AG04450 (cell line): ENCODE measurements at regions of chr11 and their contacts with region 1.

Region 1: GRCh38 chr11:126716456-126717083 is 284.0 kb downstream of the KIRREL3 start:
- DNase-seq: no peak
- H3K4me3 ChIP-seq: no peak overlapping the region
- H3K27ac ChIP-seq: no peak overlapping the region
- H3K27me3 ChIP-seq: no peaks in the 10 kb centered on the region
- CTCF ChIP-seq: peak; percentile 70

Region 2: DNA sequence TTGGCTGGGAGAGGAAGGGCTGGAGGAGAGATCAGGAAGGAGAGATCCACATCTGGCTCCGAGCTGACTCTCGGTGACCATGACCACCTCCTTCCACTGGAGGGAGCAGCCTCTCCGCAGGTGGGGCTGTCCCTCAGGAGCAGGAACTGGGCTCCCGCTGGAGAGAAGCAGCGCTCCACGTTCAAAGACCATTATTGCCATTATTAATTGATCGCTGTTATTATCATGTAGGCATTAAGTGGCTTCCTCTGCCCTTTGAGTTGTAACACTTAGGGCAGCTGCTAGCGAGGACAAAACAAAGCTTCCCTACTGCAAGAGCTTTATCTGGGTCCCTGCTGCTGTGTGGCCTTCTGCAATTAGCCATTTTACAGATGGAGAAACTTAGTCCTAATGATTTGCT is 109.2 kb before region 1 on chr11:
- CTCF ChIA-PET with region 1: interaction called, 16 read pairs
- POLR2A ChIA-PET with region 1: no interaction called
- DNase-seq: peak; percentile 42
- H3K4me3 ChIP-seq: no peak overlapping the region
- H3K27ac ChIP-seq: no peak overlapping the region
- H3K27me3 ChIP-seq: no peaks in the 10 kb centered on the region
- CTCF ChIP-seq: peak; percentile 96

Region 3: GRCh38 chr11:126727381-126727780 is 10.8 kb after region 1 on chr11:
- CTCF ChIA-PET with region 1: interaction called, 18 read pairs
- POLR2A ChIA-PET with region 1: no interaction called
- DNase-seq: no peak
- H3K4me3 ChIP-seq: no peak overlapping the region
- H3K27ac ChIP-seq: no peak overlapping the region
- H3K27me3 ChIP-seq: no peaks in the 10 kb centered on the region
- CTCF ChIP-seq: no peak

Region 4: DNA sequence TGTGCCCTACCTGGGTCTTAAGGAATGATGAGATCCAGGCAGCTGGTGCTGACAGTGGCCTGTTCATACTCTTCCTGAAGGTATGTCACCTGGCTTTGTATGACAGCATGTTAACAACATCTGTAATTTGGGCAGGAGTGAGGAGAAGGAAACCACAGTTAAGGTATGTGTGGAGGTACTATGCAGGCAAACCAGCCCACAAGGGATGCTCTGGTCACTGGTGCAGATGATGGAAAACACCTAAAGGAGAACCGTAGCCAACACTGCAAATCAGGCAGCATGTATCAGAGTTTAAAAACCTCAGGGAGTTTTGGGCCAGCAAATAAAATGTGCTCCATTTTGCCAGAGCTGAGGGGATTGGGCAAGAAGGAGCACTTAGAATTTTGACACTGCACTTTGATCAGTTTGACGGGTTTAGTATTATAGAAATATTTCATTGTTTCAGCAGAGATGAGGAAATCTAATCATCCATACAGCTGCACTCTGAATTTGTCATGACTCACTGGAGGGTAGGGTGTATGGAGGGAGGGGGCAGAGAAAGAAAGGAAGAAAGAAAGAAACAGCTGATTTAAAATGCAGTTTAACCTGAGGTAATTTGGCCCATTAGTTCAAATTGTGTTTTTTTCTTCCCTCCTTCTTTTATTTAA is 23.1 kb after region 1 on chr11:
- CTCF ChIA-PET with region 1: interaction called, 10 read pairs
- POLR2A ChIA-PET with region 1: no interaction called
- DNase-seq: no peak
- H3K4me3 ChIP-seq: no peak overlapping the region
- H3K27ac ChIP-seq: peak overlapping the region; percentile 13
- H3K27me3 ChIP-seq: no peaks in the 10 kb centered on the region
- CTCF ChIP-seq: no peak

Region 5: DNA sequence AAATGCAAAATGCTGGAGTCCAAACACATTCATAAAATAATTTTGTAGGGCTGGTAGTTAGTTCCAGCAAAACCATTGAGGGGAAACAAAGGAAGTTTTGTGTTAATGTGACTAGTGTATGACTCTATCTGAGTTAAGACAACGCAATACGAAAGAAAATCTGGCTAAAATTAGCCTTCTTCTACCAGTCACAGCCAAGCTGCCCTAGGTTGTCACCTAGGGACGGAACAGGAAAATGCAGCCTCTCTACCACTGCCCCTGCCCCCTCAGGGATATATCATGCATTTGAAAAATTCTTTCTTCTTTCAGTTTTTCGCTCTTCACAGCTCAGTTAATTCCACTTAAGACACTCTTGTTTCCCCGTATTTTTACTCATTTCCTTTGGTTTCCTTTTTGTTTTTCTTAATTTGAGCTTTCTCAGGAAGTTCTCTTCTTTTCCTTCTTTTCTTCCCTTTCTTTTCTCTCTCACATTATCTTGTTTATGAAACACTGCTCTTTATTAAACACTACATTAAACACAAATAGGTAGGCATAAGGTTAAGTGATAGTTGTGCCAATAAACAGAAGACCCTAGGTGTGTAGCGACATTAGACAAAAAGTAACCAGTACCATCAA is 253.4 kb after region 1 on chr11:
- CTCF ChIA-PET with region 1: interaction called, 26 read pairs
- POLR2A ChIA-PET with region 1: no interaction called
- DNase-seq: no peak
- H3K4me3 ChIP-seq: no peak overlapping the region
- H3K27ac ChIP-seq: peak overlapping the region; percentile 34
- H3K27me3 ChIP-seq: no peaks in the 10 kb centered on the region
- CTCF ChIP-seq: peak; percentile 92

Region 6: GRCh38 chr11:127000291-127000968 is 283.9 kb after region 1 on chr11 and contains the start of gene KIRREL3:
- CTCF ChIA-PET with region 1: interaction called, 14 read pairs
- POLR2A ChIA-PET with region 1: no interaction called
- DNase-seq: no peak
- H3K4me3 ChIP-seq: peak within 1 kb of the TSS; percentile 80
- H3K27ac ChIP-seq: peak within 1 kb of the TSS; percentile 52
- H3K27me3 ChIP-seq: no peaks in the 10 kb centered on the region
- CTCF ChIP-seq: no peak
- polyA plus RNA-seq, gene KIRREL3: 2.3 and 2.8 TPM in 2 replicates

Region 7: DNA sequence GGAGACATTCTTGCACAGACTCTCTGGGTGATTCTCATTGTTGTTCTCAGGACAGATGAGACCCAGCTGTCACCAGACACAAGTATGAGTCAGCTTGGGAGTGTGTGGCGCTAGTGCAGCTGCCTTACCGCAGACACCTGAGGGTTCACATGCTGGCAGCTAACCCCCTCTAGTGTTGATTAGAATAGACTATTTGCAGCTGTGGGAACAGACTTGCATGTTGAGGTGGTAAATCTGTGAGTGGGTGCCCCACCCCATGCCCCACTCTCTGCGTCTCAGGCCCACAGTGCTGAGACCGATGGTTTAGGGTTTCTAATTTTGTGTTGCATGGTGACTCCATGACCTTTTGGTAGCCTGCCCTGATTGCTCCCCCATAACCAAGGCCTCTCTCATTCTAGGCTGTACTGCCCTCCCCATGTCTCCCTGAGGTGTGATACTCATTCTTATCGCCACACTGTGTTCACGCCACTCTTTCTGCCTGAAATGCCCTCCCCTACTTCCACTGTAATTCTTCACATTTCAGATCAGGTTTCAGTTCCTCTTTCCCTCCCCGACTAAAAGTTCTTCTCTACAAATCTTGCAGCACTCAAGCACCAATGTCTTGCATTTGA is 357.7 kb after region 1 on chr11:
- CTCF ChIA-PET with region 1: interaction called, 32 read pairs
- POLR2A ChIA-PET with region 1: no interaction called
- DNase-seq: peak; percentile 26
- H3K4me3 ChIP-seq: no peak overlapping the region
- H3K27ac ChIP-seq: no peak overlapping the region
- H3K27me3 ChIP-seq: peaks cover 13% of the 10 kb centered on the region
- CTCF ChIP-seq: peak; percentile 48